Colonic mucosa (tissue), 4 donors: ENCODE measurements at regions of chr7 and their contacts with region 1.

Region 1: GRCh38 chr7:30276203-30276900 is 8.0 kb upstream of the ZNRF2 start:
- DNase-seq: no peak
- H3K4me3 ChIP-seq: no peak overlapping the region
- H3K27ac ChIP-seq: no peak overlapping the region
- H3K4me1 ChIP-seq: peaks cover 4% of the 10 kb centered on the region
- H3K27me3 ChIP-seq: no peaks in the 10 kb centered on the region
- CTCF ChIP-seq: peak; percentile 52

Region 2: DNA sequence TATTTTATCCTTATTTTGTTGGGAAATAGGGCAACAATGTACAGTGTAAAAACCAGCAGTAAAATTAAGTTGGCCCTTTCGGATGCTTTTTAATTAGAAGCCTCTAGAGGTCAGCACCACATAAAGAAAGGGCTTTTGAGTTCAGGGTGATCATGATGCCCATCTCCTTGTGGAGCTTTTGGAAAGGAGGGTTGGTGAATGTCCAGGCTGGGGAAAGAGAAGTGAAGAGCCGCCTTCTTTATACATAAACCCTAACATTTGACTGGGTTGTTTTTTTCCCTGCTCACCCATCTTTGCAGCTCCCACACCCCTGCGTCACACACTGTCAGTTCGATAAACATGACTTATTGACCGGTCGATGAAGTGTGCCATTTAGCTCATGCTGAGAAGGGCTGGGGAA is 111.8 kb before region 1 on chr7:
- intact Hi-C with region 1: loop called (anchors 10 kb)
- DNase-seq: no peak
- H3K4me3 ChIP-seq: no peak overlapping the region
- H3K27ac ChIP-seq: no peak overlapping the region
- H3K4me1 ChIP-seq: no peaks in the 10 kb centered on the region
- H3K27me3 ChIP-seq: no peaks in the 10 kb centered on the region
- CTCF ChIP-seq: peak; percentile 49

Region 3: GRCh38 chr7:30612658-30613265 is 336.4 kb after region 1 on chr7:
- intact Hi-C with region 1: no loop called
- DNase-seq: no peak
- H3K4me3 ChIP-seq: no peak overlapping the region
- H3K27ac ChIP-seq: no peak overlapping the region
- H3K4me1 ChIP-seq: no peaks in the 10 kb centered on the region
- H3K27me3 ChIP-seq: no peaks in the 10 kb centered on the region
- CTCF ChIP-seq: no peak